MCF 10A (cell line): ENCODE measurements at regions of chr3 and their contacts with region 1.

Region 1: GRCh38 chr3:146589899-146590508 is 15.1 kb downstream of the PLSCR5 start:
- DNase-seq: peak; percentile 55
- H3K4me3 Mint-ChIP-seq: no peak overlapping the region
- H3K27ac Mint-ChIP-seq: no peak overlapping the region
- H3K4me1 Mint-ChIP-seq: no peaks in the 10 kb centered on the region
- H3K27me3 Mint-ChIP-seq: no peaks in the 10 kb centered on the region
- CTCF ChIP-seq: peak; percentile 52

Region 2: DNA sequence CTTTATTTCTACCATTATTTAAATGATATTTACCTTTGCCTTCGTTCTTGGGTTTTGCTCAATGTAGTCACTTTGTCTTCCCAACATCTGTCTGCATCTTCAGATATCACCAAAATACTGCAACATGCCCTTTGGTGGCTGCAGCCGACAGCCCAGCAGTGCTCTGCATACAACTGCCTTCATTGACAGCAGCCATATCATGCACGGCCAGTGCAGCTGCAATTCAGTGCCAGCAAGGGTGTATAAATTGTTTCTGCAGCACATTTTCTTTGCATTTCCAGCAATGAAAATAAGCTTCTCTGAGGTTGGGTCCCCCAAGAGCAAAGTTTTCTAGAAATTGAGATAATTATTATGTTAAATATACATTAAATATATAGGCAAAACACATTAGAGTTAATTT is 21.1 kb after region 1 on chr3:
- CTCF ChIA-PET with region 1: interaction called, 11 read pairs
- POLR2A ChIA-PET with region 1: no interaction called
- intact Hi-C with region 1: no loop called
- DNase-seq: no peak
- H3K4me3 Mint-ChIP-seq: no peak overlapping the region
- H3K27ac Mint-ChIP-seq: no peak overlapping the region
- H3K4me1 Mint-ChIP-seq: no peaks in the 10 kb centered on the region
- H3K27me3 Mint-ChIP-seq: peaks cover 12% of the 10 kb centered on the region
- CTCF ChIP-seq: no peak